Activated CD8-positive, alpha-beta T cell treated with anti-CD3 and anti-CD28 coated beads, Interleukin-2, amount 10 ng/mL, durations not matched to agents 7 days and 5 days (primary cell): ENCODE measurements at regions of chr10 and their contacts with region 1.

Region 1: DNA sequence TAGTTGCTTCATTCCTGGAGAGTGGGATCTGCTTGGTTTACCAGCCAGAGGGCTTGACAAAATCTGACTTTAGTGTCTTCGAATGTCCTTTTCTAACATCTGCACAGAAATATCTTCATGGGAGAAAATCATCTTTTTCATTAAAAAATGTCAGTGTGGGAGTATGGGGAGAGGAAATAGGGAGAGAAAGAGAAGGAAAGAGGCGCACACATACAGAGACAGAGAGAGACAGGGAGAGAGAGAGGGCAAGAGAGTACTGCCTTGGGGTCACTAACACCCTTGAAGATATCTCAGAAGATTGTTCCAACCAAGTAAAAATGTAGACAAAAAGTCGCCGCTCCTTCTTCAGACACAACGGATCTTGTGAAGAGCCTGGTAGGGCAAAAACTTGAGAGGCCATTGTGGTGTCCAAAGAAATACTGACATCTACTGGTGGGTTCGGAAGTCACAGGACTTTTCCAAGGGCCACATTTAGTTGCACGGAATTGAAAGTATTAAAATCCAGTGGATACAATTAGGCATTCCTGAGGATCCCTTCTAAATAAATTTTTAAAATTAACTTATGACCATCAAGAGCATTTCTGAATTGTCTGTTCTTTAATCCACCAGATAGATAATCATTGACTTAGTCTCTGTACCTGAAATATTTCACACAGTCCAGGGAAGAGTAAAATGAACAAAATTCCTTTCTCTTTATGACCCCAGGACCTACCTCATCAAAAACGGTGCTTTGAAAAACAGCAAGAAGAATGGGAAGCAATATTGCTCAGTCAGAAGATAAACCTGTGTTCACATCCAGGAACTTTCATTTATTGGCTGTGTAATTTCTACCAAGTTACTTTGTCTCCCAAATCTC is 29.7 kb downstream of the VIM start:
- DNase-seq: peak; percentile 77
- ATAC-seq: peak; percentile 85
- H3K4me3 Mint-ChIP-seq: peak overlapping the region; percentile 32
- H3K27ac Mint-ChIP-seq: no peak overlapping the region
- H3K4me1 Mint-ChIP-seq: peaks cover 12% of the 10 kb centered on the region
- H3K27me3 Mint-ChIP-seq: no peaks in the 10 kb centered on the region

Region 2: GRCh38 chr10:16853201-16853600 is 404.5 kb before region 1 on chr10:
- CTCF ChIA-PET with region 1: interaction called, 13 read pairs
- POLR2A ChIA-PET with region 1: no interaction called
- DNase-seq: no peak
- ATAC-seq: peak; percentile 63
- H3K4me3 Mint-ChIP-seq: no peak overlapping the region
- H3K27ac Mint-ChIP-seq: no peak overlapping the region
- H3K4me1 Mint-ChIP-seq: no peaks in the 10 kb centered on the region
- H3K27me3 Mint-ChIP-seq: peaks cover 2% of the 10 kb centered on the region

Region 3: GRCh38 chr10:17222329-17222728 is 35.4 kb before region 1 on chr10:
- CTCF ChIA-PET with region 1: no interaction called
- POLR2A ChIA-PET with region 1: no interaction called
- DNase-seq: peak; percentile 9
- ATAC-seq: no peak
- H3K4me3 Mint-ChIP-seq: no peak overlapping the region
- H3K27ac Mint-ChIP-seq: no peak overlapping the region
- H3K4me1 Mint-ChIP-seq: peaks cover 46% of the 10 kb centered on the region
- H3K27me3 Mint-ChIP-seq: no peaks in the 10 kb centered on the region